ENCODE measurements at regions of chr11 and their contacts with region 1.

Region 1: GRCh38 chr11:115678942-115679341 is 174.7 kb upstream of the CADM1 start:
- DNase-seq: peak in 1 of 2 experiments; percentile 81
- H3K4me3 ChIP-seq: no peak overlapping the region
- H3K27ac ChIP-seq: no peak overlapping the region
- H3K4me1 ChIP-seq: peaks cover 0 to 8% (median 3%) of the 10 kb centered on the region in 4 experiments; a peak in 5 of 7 replicates
- H3K27me3 ChIP-seq: no peaks in the 10 kb centered on the region
- CTCF ChIP-seq: peak; percentile 59 to 76 (median 71)
- EP300 ChIP-seq: no peak
- POLR2A ChIP-seq: no peak
- RAD21 ChIP-seq: peak; percentile 88 to 91

Region 2: GRCh38 chr11:115334932-115335788 is 343.8 kb before region 1 on chr11:
- CTCF ChIA-PET with region 1: interaction called, 25 read pairs
- POLR2A ChIA-PET with region 1: no interaction called
- DNase-seq: no peak
- H3K4me3 ChIP-seq: no peak overlapping the region
- H3K27ac ChIP-seq: no peak overlapping the region
- H3K4me1 ChIP-seq: peaks cover 0 to 5% (median 0%) of the 10 kb centered on the region in 4 experiments; a peak in 1 of 7 replicates
- H3K27me3 ChIP-seq: no peaks in the 10 kb centered on the region
- CTCF ChIP-seq: peak in 2 of 3 experiments; percentile 33 to 37; a peak in 2 of 4 replicates
- EP300 ChIP-seq: no peak
- POLR2A ChIP-seq: no peak
- RAD21 ChIP-seq: peak; percentile 58 to 66

Region 3: GRCh38 chr11:115659061-115659963 is 19.6 kb before region 1 on chr11:
- CTCF ChIA-PET with region 1: interaction called, 35 read pairs
- POLR2A ChIA-PET with region 1: no interaction called
- DNase-seq: peak in 1 of 2 experiments; percentile 63
- H3K4me3 ChIP-seq: peak overlapping the region; percentile 33 to 66 (median 58)
- H3K27ac ChIP-seq: no peak overlapping the region
- H3K4me1 ChIP-seq: peaks cover 0 to 9% (median 5%) of the 10 kb centered on the region in 4 experiments; a peak in 6 of 7 replicates
- H3K27me3 ChIP-seq: peaks cover 12 to 42% (median 35%) of the 10 kb centered on the region in 4 experiments
- CTCF ChIP-seq: no peak
- EP300 ChIP-seq: no peak
- POLR2A ChIP-seq: no peak
- RAD21 ChIP-seq: no peak

Region 4: GRCh38 chr11:115693002-115693401 is 14.1 kb after region 1 on chr11:
- CTCF ChIA-PET with region 1: interaction called, 16 read pairs
- POLR2A ChIA-PET with region 1: no interaction called
- DNase-seq: no peak
- H3K4me3 ChIP-seq: no peak overlapping the region
- H3K27ac ChIP-seq: no peak overlapping the region
- H3K4me1 ChIP-seq: peaks cover 0 to 2% (median under 1%) of the 10 kb centered on the region in 4 experiments; a peak in 2 of 7 replicates
- H3K27me3 ChIP-seq: no peaks in the 10 kb centered on the region
- CTCF ChIP-seq: peak; percentile 34 to 54 (median 50)
- EP300 ChIP-seq: no peak
- POLR2A ChIP-seq: no peak
- RAD21 ChIP-seq: peak; percentile 43 to 61

Region 5: GRCh38 chr11:115860261-115860660 is 181.3 kb after region 1 on chr11:
- CTCF ChIA-PET with region 1: no interaction called
- POLR2A ChIA-PET with region 1: no interaction called
- DNase-seq: no peak
- H3K4me3 ChIP-seq: no peak overlapping the region
- H3K27ac ChIP-seq: no peak overlapping the region
- H3K4me1 ChIP-seq: no peaks in the 10 kb centered on the region
- H3K27me3 ChIP-seq: no peaks in the 10 kb centered on the region
- CTCF ChIP-seq: no peak
- EP300 ChIP-seq: no peak
- POLR2A ChIP-seq: no peak
- RAD21 ChIP-seq: no peak